Activated naive CD4-positive, alpha-beta T cell treated with anti-CD3 and anti-CD28 coated beads, Interleukin-2, amount 10 ng/mL, durations not matched to agents 7 days and 5 days (primary cell): ENCODE measurements at regions of chr2 and their contacts with region 1.

Region 1: GRCh38 chr2:69306822-69307578 is 80.0 kb downstream of the GFPT1 start:
- DNase-seq: peak; percentile 75
- H3K4me3 Mint-ChIP-seq: peak overlapping the region; percentile 66
- H3K27ac Mint-ChIP-seq: peak overlapping the region; percentile 9
- H3K4me1 Mint-ChIP-seq: peaks cover 17% of the 10 kb centered on the region
- H3K27me3 Mint-ChIP-seq: peaks cover 69% of the 10 kb centered on the region

Region 2: DNA sequence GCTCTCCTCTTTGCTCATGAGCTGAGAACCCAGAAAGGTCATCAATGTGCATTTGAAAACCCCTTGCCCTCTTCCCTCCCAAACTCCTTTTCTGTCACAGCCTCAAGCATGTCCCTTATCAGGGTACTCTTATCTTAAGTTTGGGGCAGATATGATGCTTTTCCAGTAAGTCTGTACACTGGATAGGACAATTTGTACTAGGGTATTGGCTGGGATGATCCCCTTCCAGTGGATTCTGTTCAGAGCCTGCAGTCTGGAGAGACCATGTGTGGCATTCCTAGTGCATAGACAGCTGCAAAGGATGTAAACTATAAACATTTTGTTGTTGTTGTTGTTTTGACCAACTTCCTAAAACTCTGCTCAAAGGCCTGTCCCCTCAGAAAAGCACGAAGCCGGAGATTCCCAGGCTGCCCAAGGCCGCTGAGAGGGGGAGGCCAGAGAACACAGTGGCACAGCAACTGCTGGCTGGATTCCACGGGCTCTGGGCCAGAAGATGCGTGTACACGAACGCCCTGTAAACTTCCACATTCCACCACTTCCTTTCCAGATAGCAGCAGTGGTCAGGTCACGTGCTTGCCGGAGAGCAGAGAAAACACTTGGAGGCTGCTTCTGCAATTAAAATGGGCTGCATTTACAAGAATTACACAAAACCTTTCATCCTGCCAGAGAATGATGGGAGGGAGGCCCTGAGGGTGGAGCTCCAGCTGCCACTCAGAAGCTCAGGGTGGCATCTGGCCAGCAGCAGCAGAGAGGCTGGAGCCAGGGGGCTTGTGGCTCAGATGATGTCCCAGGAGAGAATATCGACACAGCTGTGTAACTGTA is 477.9 kb before region 1 on chr2:
- CTCF ChIA-PET with region 1: no interaction called
- DNase-seq: peak; percentile 85
- H3K4me3 Mint-ChIP-seq: peak overlapping the region; percentile 57
- H3K27ac Mint-ChIP-seq: peak overlapping the region; percentile 94
- H3K4me1 Mint-ChIP-seq: peaks cover 62% of the 10 kb centered on the region
- H3K27me3 Mint-ChIP-seq: no peaks in the 10 kb centered on the region

Region 3: GRCh38 chr2:68943581-68944568 is 363.1 kb before region 1 on chr2:
- CTCF ChIA-PET with region 1: interaction called, 13 read pairs
- DNase-seq: peak; percentile 59
- H3K4me3 Mint-ChIP-seq: no peak overlapping the region
- H3K27ac Mint-ChIP-seq: no peak overlapping the region
- H3K4me1 Mint-ChIP-seq: no peaks in the 10 kb centered on the region
- H3K27me3 Mint-ChIP-seq: peaks cover 45% of the 10 kb centered on the region

Region 4: DNA sequence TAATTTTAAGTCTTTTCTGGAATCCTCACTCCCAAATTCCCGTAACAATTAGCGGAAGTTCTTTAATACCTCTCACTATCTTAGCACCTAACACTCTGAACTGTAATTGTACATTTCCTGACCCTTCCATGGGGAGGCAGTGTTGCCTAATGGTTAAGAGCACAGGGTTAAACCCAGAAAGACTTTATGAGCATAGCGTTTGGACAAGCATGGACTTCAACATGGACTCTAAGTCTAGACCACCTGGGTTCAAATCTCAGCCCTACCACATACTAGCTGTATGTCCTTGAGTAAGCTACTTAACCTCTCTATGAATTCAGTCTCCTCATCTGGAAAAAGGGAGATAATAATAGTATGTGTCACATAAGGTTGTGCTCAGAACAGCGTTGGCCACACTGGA is 281.0 kb before region 1 on chr2:
- CTCF ChIA-PET with region 1: interaction called, 16 read pairs
- DNase-seq: peak; percentile 42
- H3K4me3 Mint-ChIP-seq: no peak overlapping the region
- H3K27ac Mint-ChIP-seq: no peak overlapping the region
- H3K4me1 Mint-ChIP-seq: no peaks in the 10 kb centered on the region
- H3K27me3 Mint-ChIP-seq: peaks cover 10% of the 10 kb centered on the region

Region 5: DNA sequence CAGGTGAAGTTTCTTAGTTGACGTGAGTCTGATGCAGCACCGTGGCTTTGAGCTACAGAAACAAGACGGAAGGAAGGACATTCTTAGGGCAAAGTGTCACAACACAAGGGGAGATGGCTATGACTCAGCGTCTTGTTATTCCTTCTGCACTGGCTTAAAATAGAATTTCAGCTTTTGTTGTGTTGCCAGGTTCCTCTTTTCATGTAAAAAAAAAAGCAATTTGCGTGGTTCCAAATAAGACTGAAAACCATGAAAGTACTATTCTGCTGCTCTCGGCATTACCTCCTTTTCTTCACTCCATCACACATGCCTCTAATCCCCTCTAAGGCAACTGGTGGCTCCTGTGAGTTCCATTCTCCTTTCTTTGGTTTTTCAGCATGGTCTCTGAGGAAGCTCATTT is 143.9 kb before region 1 on chr2:
- CTCF ChIA-PET with region 1: no interaction called
- DNase-seq: no peak
- H3K4me3 Mint-ChIP-seq: no peak overlapping the region
- H3K27ac Mint-ChIP-seq: no peak overlapping the region
- H3K4me1 Mint-ChIP-seq: peaks cover 2% of the 10 kb centered on the region
- H3K27me3 Mint-ChIP-seq: peaks cover 7% of the 10 kb centered on the region

Region 6: GRCh38 chr2:69405306-69405705 is 98.3 kb after region 1 on chr2:
- CTCF ChIA-PET with region 1: no interaction called
- DNase-seq: no peak
- H3K4me3 Mint-ChIP-seq: no peak overlapping the region
- H3K27ac Mint-ChIP-seq: no peak overlapping the region
- H3K4me1 Mint-ChIP-seq: no peaks in the 10 kb centered on the region
- H3K27me3 Mint-ChIP-seq: no peaks in the 10 kb centered on the region

Region 7: GRCh38 chr2:69416147-69416546 is 109.1 kb after region 1 on chr2:
- CTCF ChIA-PET with region 1: no interaction called
- DNase-seq: no peak
- H3K4me3 Mint-ChIP-seq: no peak overlapping the region
- H3K27ac Mint-ChIP-seq: no peak overlapping the region
- H3K4me1 Mint-ChIP-seq: peaks cover 2% of the 10 kb centered on the region
- H3K27me3 Mint-ChIP-seq: no peaks in the 10 kb centered on the region